Natural killer cell (primary cell): ENCODE measurements at regions of chr12 and their contacts with region 1.

Region 1: GRCh38 chr12:98644711-98645402 is at the starts of genes APAF1 and IKBIP:
- DNase-seq: peak; percentile 98
- ATAC-seq: peak; percentile 87 to 98 (median 89)
- H3K4me3 ChIP-seq: peak within 1 kb of the TSS; percentile 82
- H3K4me3 Mint-ChIP-seq: peak within 1 kb of the TSS; percentile 99
- H3K27ac ChIP-seq: peak within 1 kb of the TSS; percentile 77
- H3K27ac Mint-ChIP-seq: peak within 1 kb of the TSS; percentile 94 to 99
- H3K4me1 ChIP-seq: peaks cover 4% of the 10 kb centered on the region
- H3K4me1 Mint-ChIP-seq: peaks cover 25 to 27% of the 10 kb centered on the region in 2 donors
- H3K27me3 ChIP-seq: no peaks in the 10 kb centered on the region
- H3K27me3 Mint-ChIP-seq: no peaks in the 10 kb centered on the region
- CTCF ChIP-seq: no peak
- total RNA-seq, gene APAF1: 33.5 to 43.7 (median 34.9) TPM
- total RNA-seq, gene IKBIP: 3.9 to 6.3 (median 4.6) TPM

Region 2: GRCh38 chr12:98516184-98516873 is 128.5 kb before region 1 on chr12:
- intact Hi-C with region 1: loop called (anchors 5 kb)
- DNase-seq: peak; percentile 67 to 94
- ATAC-seq: peak; percentile 68 to 82 (median 69)
- H3K4me3 ChIP-seq: peak overlapping the region; percentile 49
- H3K4me3 Mint-ChIP-seq: peak overlapping the region; percentile 99
- H3K27ac ChIP-seq: peak overlapping the region; percentile 75
- H3K27ac Mint-ChIP-seq: peak overlapping the region; percentile 94 to 97
- H3K4me1 ChIP-seq: peaks cover 33% of the 10 kb centered on the region
- H3K4me1 Mint-ChIP-seq: peaks cover 31 to 36% of the 10 kb centered on the region in 2 donors
- H3K27me3 ChIP-seq: no peaks in the 10 kb centered on the region
- H3K27me3 Mint-ChIP-seq: no peaks in the 10 kb centered on the region
- CTCF ChIP-seq: peak; percentile 76

Region 3: DNA sequence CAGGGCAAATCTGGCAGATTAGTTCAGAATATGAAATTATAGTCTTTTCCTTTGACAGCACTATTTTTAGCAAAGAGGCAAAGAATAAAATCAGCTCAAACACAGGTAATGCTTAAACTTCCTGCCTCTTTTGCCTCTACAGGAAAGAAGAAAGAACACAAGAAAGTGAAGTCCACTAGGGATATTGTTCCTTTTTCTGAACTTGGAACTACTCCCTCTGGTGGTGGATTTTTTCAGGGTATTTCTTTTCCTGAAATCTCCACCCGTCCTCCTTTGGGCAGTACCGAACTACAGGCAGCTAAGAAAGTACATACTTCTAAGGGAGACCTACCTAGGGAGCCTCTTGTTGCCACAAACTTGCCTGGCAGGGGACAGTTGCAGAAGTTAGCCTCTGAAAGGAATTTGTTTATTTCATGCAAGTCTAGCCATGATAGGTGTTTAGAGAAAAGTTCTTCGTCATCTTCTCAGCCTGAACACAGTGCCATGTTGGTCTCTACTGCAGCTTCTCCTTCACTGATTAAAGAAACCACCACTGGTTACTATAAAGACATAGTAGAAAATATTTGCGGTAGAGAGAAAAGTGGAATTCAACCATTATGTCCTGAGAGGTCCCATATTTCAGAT is 112.1 kb before region 1 on chr12:
- intact Hi-C with region 1: no loop called
- DNase-seq: peak in 1 of 2 donors; percentile 72
- ATAC-seq: peak in 2 of 3 donors; percentile 50 to 61
- H3K4me3 ChIP-seq: no peak overlapping the region
- H3K4me3 Mint-ChIP-seq: no peak overlapping the region
- H3K27ac ChIP-seq: no peak overlapping the region
- H3K27ac Mint-ChIP-seq: peak overlapping the region in 1 of 2 donors; percentile 40
- H3K4me1 ChIP-seq: no peaks in the 10 kb centered on the region
- H3K4me1 Mint-ChIP-seq: peaks cover 4 to 22% of the 10 kb centered on the region in 2 donors
- H3K27me3 ChIP-seq: no peaks in the 10 kb centered on the region
- H3K27me3 Mint-ChIP-seq: no peaks in the 10 kb centered on the region
- CTCF ChIP-seq: peak; percentile 74

Region 4: GRCh38 chr12:98612696-98613334 is 32.0 kb before region 1 on chr12:
- intact Hi-C with region 1: loop called (anchors 1 kb)
- DNase-seq: peak in 1 of 2 donors; percentile 35
- ATAC-seq: peak; percentile 85 to 97 (median 96)
- H3K4me3 ChIP-seq: no peak overlapping the region
- H3K4me3 Mint-ChIP-seq: peak overlapping the region; percentile 45
- H3K27ac ChIP-seq: peak overlapping the region; percentile 56
- H3K27ac Mint-ChIP-seq: peak overlapping the region; percentile 86 to 91
- H3K4me1 ChIP-seq: peaks cover 13% of the 10 kb centered on the region
- H3K4me1 Mint-ChIP-seq: peaks cover 8 to 9% of the 10 kb centered on the region in 2 donors
- H3K27me3 ChIP-seq: no peaks in the 10 kb centered on the region
- H3K27me3 Mint-ChIP-seq: no peaks in the 10 kb centered on the region
- CTCF ChIP-seq: no peak

Region 5: GRCh38 chr12:98821866-98822265 is 177.0 kb after region 1 on chr12:
- intact Hi-C with region 1: no loop called
- DNase-seq: no peak
- ATAC-seq: no peak
- H3K4me3 ChIP-seq: no peak overlapping the region
- H3K4me3 Mint-ChIP-seq: no peak overlapping the region
- H3K27ac ChIP-seq: no peak overlapping the region
- H3K27ac Mint-ChIP-seq: no peak overlapping the region
- H3K4me1 ChIP-seq: no peaks in the 10 kb centered on the region
- H3K4me1 Mint-ChIP-seq: no peaks in the 10 kb centered on the region
- H3K27me3 ChIP-seq: no peaks in the 10 kb centered on the region
- H3K27me3 Mint-ChIP-seq: peaks cover 7 to 20% of the 10 kb centered on the region in 2 donors
- CTCF ChIP-seq: no peak